ENCODE measurements at regions of chr14 and their contacts with region 1.

Region 1: DNA sequence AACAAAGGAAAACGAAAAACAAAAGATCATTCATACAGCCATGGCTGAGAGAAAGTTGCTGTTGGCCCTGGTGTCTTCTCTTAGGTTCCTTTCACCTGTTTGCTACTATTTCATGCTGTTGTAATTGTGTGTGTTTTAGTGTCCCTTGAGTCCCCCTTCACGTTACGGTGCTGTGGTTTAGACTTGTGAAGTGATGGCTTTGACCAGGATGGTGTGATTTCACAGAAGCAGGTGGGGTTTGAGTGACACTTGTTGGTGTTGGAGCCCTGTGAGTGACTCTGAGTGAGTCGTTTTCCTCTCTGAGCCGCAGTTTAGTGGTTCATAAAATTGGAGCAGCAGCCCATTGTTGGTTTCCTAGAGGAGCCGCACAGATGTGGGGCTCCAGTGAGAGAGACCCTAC is 635.4 kb downstream of the VRK1 start:
- DNase-seq: no peak
- ATAC-seq: peak; percentile 58
- H3K4me3 ChIP-seq: no peak overlapping the region
- H3K27ac ChIP-seq: no peak overlapping the region
- H3K4me1 ChIP-seq: no peaks in the 10 kb centered on the region
- H3K27me3 ChIP-seq: no peaks in the 10 kb centered on the region
- CTCF ChIP-seq: no peak
- EP300 ChIP-seq: 0 out of 4 replicates have a peak, but pooled peaks of 1 of the 2 experiments have one; percentile 58
- POLR2A ChIP-seq: no peak
- RAD21 ChIP-seq: no peak

Region 2: GRCh38 chr14:97625477-97625876 is 192.9 kb after region 1 on chr14:
- CTCF ChIA-PET with region 1: no interaction called
- POLR2A ChIA-PET with region 1: no interaction called
- RAD21 ChIA-PET with region 1: no interaction called
- SMC1A ChIA-PET with region 1: interaction called, 4 read pairs
- in situ Hi-C with region 1: no loop called
- intact Hi-C with region 1: loop called (anchors 10 kb)
- DNase-seq: no peak
- ATAC-seq: no peak; the same call in 2 of the 3 replicates
- H3K4me3 ChIP-seq: no peak overlapping the region
- H3K27ac ChIP-seq: no peak overlapping the region
- H3K4me1 ChIP-seq: no peaks in the 10 kb centered on the region; the same call in 1 of the 2 replicates
- H3K27me3 ChIP-seq: no peaks in the 10 kb centered on the region
- CTCF ChIP-seq: no peak
- EP300 ChIP-seq: no peak
- POLR2A ChIP-seq: no peak
- RAD21 ChIP-seq: no peak

Measured in GM12878 (cell line).